Esophagus muscularis mucosa (tissue), 4 donors: ENCODE measurements at regions of chr9 and their contacts with region 1.

Region 1: GRCh38 chr9:121222524-121223171 is 21.0 kb upstream of the RAB14 start:
- DNase-seq: no peak
- H3K4me3 ChIP-seq: no peak overlapping the region
- H3K27ac ChIP-seq: no peak overlapping the region
- H3K4me1 ChIP-seq: peaks cover 0 to 9% (median 5%) of the 10 kb centered on the region in 4 donors
- H3K27me3 ChIP-seq: no peaks in the 10 kb centered on the region
- CTCF ChIP-seq: peak; percentile 72 to 77 (median 77)
- EP300 ChIP-seq: no peak
- POLR2A ChIP-seq: no peak

Region 2: DNA sequence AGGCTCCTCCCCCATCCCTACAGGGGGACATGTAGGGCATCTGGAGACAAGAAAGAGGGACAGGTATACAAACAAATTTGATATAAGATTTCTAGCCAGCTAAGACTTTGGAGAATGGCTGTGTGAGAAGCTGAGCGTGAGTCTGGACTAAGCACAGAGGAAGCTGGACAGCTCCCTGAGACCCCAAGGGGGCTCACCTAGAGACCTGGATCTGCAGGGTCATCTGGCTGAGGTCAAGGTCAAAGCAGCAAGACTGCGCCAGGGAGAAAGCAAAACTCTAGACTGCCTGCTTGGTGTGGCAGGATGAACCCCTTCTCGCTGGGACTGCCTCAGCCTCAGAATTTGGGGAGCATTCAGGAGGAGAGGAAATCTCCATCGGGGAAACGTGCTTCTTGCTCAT is 37.3 kb after region 1 on chr9:
- intact Hi-C with region 1: loop called (anchors 5 kb)
- DNase-seq: no peak
- H3K4me3 ChIP-seq: no peak overlapping the region
- H3K27ac ChIP-seq: no peak overlapping the region
- H3K4me1 ChIP-seq: peaks cover 5 to 31% (median 28%) of the 10 kb centered on the region in 4 donors
- H3K27me3 ChIP-seq: no peaks in the 10 kb centered on the region
- CTCF ChIP-seq: no peak
- EP300 ChIP-seq: no peak
- POLR2A ChIP-seq: no peak

Region 3: DNA sequence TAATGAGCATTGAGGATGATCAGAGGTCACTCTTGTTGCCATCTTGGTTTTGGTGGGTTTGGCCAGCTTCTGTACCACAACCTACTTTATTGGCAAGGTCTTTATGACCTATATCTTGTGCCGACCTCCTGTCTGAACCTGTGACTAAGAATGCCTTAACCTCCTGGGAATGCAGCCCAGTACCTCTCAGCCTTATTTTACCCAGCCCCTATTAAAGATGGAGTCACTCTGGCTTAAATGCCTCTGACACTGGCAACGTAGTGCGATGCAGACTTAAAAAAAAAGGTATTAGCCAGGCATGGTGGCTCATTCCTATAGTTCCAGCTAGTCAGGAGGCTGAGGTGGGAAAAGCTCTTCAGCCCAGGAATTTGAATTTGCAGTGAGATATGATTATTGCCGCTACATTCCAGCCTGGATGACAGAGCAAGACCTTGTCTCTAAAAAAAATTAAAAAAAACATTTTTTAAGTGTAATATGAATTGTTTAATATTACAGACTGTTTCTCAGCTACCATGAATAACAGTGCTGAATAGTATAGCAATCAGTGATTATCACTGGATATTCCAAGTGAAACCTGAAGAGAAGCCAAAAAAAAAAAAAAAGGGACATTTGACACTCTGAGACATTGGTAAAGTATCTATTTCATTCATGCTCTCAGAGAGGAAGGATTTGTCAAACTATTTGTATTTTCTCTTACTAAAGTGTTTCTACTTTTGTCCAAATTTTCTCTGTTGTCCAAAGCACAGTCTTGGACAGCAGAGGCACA is 165.7 kb after region 1 on chr9:
- intact Hi-C with region 1: loop called (anchors 5 kb)
- DNase-seq: no peak
- H3K4me3 ChIP-seq: no peak overlapping the region
- H3K27ac ChIP-seq: no peak overlapping the region
- H3K4me1 ChIP-seq: no peaks in the 10 kb centered on the region
- H3K27me3 ChIP-seq: no peaks in the 10 kb centered on the region
- CTCF ChIP-seq: no peak
- EP300 ChIP-seq: no peak
- POLR2A ChIP-seq: no peak